CD8-positive, alpha-beta T cell (primary cell): ENCODE measurements at regions of chr5 and their contacts with region 1.

Region 1: GRCh38 chr5:131514316-131515283 is 120.4 kb downstream of the RAPGEF6 start:
- DNase-seq: peak in 3 of 9 experiments; percentile 24 to 82 (median 72)
- ATAC-seq: peak; percentile 78
- H3K4me3 ChIP-seq: peak overlapping the region; percentile 31 to 36
- H3K4me3 Mint-ChIP-seq: peak overlapping the region; percentile 76
- H3K27ac ChIP-seq: peak overlapping the region; percentile 8 to 71
- H3K27ac Mint-ChIP-seq: peak overlapping the region; percentile 86
- H3K4me1 ChIP-seq: peaks cover 50% of the 10 kb centered on the region
- H3K4me1 Mint-ChIP-seq: peaks cover 63% of the 10 kb centered on the region
- H3K27me3 ChIP-seq: no peaks in the 10 kb centered on the region
- H3K27me3 Mint-ChIP-seq: no peaks in the 10 kb centered on the region
- CTCF ChIP-seq: peak; percentile 9

Region 2: DNA sequence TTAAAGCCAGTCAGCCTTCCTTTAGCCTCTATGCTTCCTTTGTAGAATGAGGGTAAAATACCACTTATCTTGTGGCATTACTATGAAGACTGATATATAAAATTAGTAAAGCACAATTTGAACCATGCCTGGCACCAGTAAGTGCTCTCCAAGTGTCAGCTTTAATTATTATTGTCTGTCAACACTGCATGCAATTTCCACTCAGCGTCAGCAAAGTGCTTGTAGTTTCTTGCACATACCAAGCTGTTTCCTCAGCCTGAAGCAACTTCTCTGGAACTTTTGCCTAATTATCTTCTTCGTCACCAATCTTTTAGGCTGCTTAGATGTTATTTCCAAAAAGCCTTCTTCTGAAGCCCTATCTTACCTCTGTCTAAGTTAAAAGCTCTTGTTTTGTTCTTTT is 73.4 kb before region 1 on chr5:
- CTCF ChIA-PET with region 1: no interaction called
- POLR2A ChIA-PET with region 1: no interaction called
- intact Hi-C with region 1: loop called in 1 of 2 experiments (anchors 2 kb)
- DNase-seq: no peak
- ATAC-seq: no peak
- H3K4me3 ChIP-seq: no peak overlapping the region
- H3K4me3 Mint-ChIP-seq: no peak overlapping the region
- H3K27ac ChIP-seq: no peak overlapping the region
- H3K27ac Mint-ChIP-seq: peak overlapping the region; percentile 27
- H3K4me1 ChIP-seq: no peaks in the 10 kb centered on the region
- H3K4me1 Mint-ChIP-seq: peaks cover 21% of the 10 kb centered on the region
- H3K27me3 ChIP-seq: no peaks in the 10 kb centered on the region
- H3K27me3 Mint-ChIP-seq: no peaks in the 10 kb centered on the region
- CTCF ChIP-seq: no peak

Region 3: DNA sequence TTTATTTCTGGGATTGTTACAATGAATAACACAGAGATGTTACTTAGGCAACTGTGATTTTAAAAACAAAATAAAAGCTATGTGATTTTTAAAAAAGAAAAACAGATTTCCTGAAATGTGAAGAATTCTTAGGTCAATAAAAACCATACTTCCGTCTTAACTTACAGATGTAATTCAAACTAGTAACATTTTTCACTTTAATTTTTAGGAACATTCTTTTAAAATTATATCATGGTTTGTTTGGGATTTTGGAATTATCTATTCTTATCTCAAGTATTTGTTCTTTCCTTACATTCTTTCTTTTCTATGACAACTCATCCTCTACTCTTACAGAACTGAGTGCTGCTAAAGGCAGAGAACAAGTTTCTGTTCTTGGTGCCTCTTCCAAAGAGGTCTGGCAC is 39.1 kb before region 1 on chr5:
- CTCF ChIA-PET with region 1: no interaction called
- POLR2A ChIA-PET with region 1: no interaction called
- intact Hi-C with region 1: loop called in 1 of 2 experiments (anchors 5 kb)
- DNase-seq: no peak
- ATAC-seq: no peak
- H3K4me3 ChIP-seq: no peak overlapping the region
- H3K4me3 Mint-ChIP-seq: no peak overlapping the region
- H3K27ac ChIP-seq: no peak overlapping the region
- H3K27ac Mint-ChIP-seq: peak overlapping the region; percentile 52
- H3K4me1 ChIP-seq: peaks cover 13% of the 10 kb centered on the region
- H3K4me1 Mint-ChIP-seq: peaks cover 48% of the 10 kb centered on the region
- H3K27me3 ChIP-seq: no peaks in the 10 kb centered on the region
- H3K27me3 Mint-ChIP-seq: no peaks in the 10 kb centered on the region
- CTCF ChIP-seq: no peak

Region 4: GRCh38 chr5:131530706-131531331 is 16.2 kb after region 1 on chr5:
- CTCF ChIA-PET with region 1: interaction called, 8 read pairs
- POLR2A ChIA-PET with region 1: interaction called, 3 read pairs
- intact Hi-C with region 1: loop called (anchors 1 to 2 kb)
- DNase-seq: peak in 1 of 9 experiments; percentile 43
- ATAC-seq: peak; percentile 58
- H3K4me3 ChIP-seq: no peak overlapping the region
- H3K4me3 Mint-ChIP-seq: peak overlapping the region; percentile 62
- H3K27ac ChIP-seq: peak overlapping the region in 1 of 2 experiments; percentile 41
- H3K27ac Mint-ChIP-seq: peak overlapping the region; percentile 89
- H3K4me1 ChIP-seq: peaks cover 83% of the 10 kb centered on the region
- H3K4me1 Mint-ChIP-seq: peaks cover 76% of the 10 kb centered on the region
- H3K27me3 ChIP-seq: no peaks in the 10 kb centered on the region
- H3K27me3 Mint-ChIP-seq: no peaks in the 10 kb centered on the region
- CTCF ChIP-seq: no peak

Region 5: GRCh38 chr5:131548176-131548575 is 33.6 kb after region 1 on chr5:
- CTCF ChIA-PET with region 1: no interaction called
- POLR2A ChIA-PET with region 1: no interaction called
- intact Hi-C with region 1: loop called (anchors 2 to 5 kb)
- DNase-seq: peak in 2 of 9 experiments; percentile 61 to 78
- ATAC-seq: peak; percentile 95
- H3K4me3 ChIP-seq: peak overlapping the region; percentile 51 to 55
- H3K4me3 Mint-ChIP-seq: peak overlapping the region; percentile 95
- H3K27ac ChIP-seq: peak overlapping the region; percentile 56 to 67
- H3K27ac Mint-ChIP-seq: peak overlapping the region; percentile 97
- H3K4me1 ChIP-seq: peaks cover 44% of the 10 kb centered on the region
- H3K4me1 Mint-ChIP-seq: peaks cover 63% of the 10 kb centered on the region
- H3K27me3 ChIP-seq: no peaks in the 10 kb centered on the region
- H3K27me3 Mint-ChIP-seq: no peaks in the 10 kb centered on the region
- CTCF ChIP-seq: no peak

Region 6: GRCh38 chr5:131634996-131635754 is 120.6 kb after region 1 on chr5 and contains the start of gene RAPGEF6:
- CTCF ChIA-PET with region 1: no interaction called
- POLR2A ChIA-PET with region 1: interaction called, 4 read pairs
- intact Hi-C with region 1: loop called (anchors 5 kb)
- DNase-seq: peak; percentile 91 to 100 (median 95)
- ATAC-seq: peak; percentile 83
- H3K4me3 ChIP-seq: peak within 1 kb of the TSS; percentile 83
- H3K4me3 Mint-ChIP-seq: peak within 1 kb of the TSS; percentile 96
- H3K27ac ChIP-seq: peak within 1 kb of the TSS; percentile 94 to 98
- H3K27ac Mint-ChIP-seq: peak within 1 kb of the TSS; percentile 99
- H3K4me1 ChIP-seq: peaks cover 61% of the 10 kb centered on the region
- H3K4me1 Mint-ChIP-seq: peaks cover 34% of the 10 kb centered on the region
- H3K27me3 ChIP-seq: no peaks in the 10 kb centered on the region
- H3K27me3 Mint-ChIP-seq: no peaks in the 10 kb centered on the region
- CTCF ChIP-seq: no peak
- total RNA-seq, gene RAPGEF6: 64.3 to 71.7 TPM

Region 7: GRCh38 chr5:132007399-132008165 is 493.0 kb after region 1 on chr5:
- CTCF ChIA-PET with region 1: interaction called, 9 read pairs
- POLR2A ChIA-PET with region 1: no interaction called
- intact Hi-C with region 1: loop called in 1 of 2 experiments (anchors 5 kb)
- DNase-seq: peak; percentile 51 to 84 (median 79)
- ATAC-seq: peak; percentile 47
- H3K4me3 ChIP-seq: no peak overlapping the region
- H3K4me3 Mint-ChIP-seq: no peak overlapping the region
- H3K27ac ChIP-seq: no peak overlapping the region
- H3K27ac Mint-ChIP-seq: no peak overlapping the region
- H3K4me1 ChIP-seq: peaks cover 11% of the 10 kb centered on the region
- H3K4me1 Mint-ChIP-seq: peaks cover 23% of the 10 kb centered on the region
- H3K27me3 ChIP-seq: peaks cover 0 to 9% of the 10 kb centered on the region in 2 experiments
- H3K27me3 Mint-ChIP-seq: peaks cover 13% of the 10 kb centered on the region
- CTCF ChIP-seq: peak; percentile 67